ENCODE measurements at regions of chr16 and their contacts with region 1.

Region 1: GRCh38 chr16:49350265-49351095 is 23.1 kb upstream of the C16orf78 start:
- DNase-seq: peak in 1 of 2 experiments; percentile 94
- H3K4me3 ChIP-seq: no peak overlapping the region
- H3K27ac ChIP-seq: no peak overlapping the region
- H3K4me1 ChIP-seq: peaks cover 0 to 3% (median 0%) of the 10 kb centered on the region in 4 experiments; a peak in 1 of 7 replicates
- H3K27me3 ChIP-seq: no peaks in the 10 kb centered on the region
- CTCF ChIP-seq: peak; percentile 92 to 93 (median 92)
- EP300 ChIP-seq: no peak
- POLR2A ChIP-seq: no peak
- RAD21 ChIP-seq: peak; percentile 98 to 99

Region 2: DNA sequence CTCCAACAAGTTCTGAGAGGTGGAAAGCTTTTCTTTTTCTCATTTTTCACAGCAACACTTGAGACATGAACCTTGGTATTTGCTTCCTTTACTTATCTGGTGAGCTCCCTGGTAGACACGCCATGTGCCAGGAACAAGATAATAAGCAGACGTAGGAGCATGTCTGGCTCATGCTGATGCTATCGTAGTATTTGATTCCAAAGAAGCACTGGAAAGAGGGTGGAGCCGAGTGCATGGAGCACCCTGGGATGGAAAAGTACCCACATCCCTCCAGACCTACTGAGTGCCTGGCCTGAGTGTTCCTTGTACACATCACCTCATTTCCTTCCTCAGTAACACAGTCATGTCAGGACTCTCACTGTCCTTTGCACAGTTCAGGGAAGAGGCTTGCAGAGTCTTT is 299.9 kb before region 1 on chr16:
- CTCF ChIA-PET with region 1: interaction called, 10 read pairs
- POLR2A ChIA-PET with region 1: no interaction called
- DNase-seq: no peak
- H3K4me3 ChIP-seq: no peak overlapping the region
- H3K27ac ChIP-seq: no peak overlapping the region
- H3K4me1 ChIP-seq: peaks cover 0 to 2% (median under 1%) of the 10 kb centered on the region in 4 experiments; a peak in 4 of 7 replicates
- H3K27me3 ChIP-seq: no peaks in the 10 kb centered on the region; a peak in 1 of 7 replicates
- CTCF ChIP-seq: no peak
- EP300 ChIP-seq: no peak
- POLR2A ChIP-seq: no peak
- RAD21 ChIP-seq: no peak

Region 3: GRCh38 chr16:49269201-49269600 is 81.3 kb before region 1 on chr16:
- CTCF ChIA-PET with region 1: interaction called, 28 read pairs
- POLR2A ChIA-PET with region 1: no interaction called
- DNase-seq: no peak
- H3K4me3 ChIP-seq: no peak overlapping the region
- H3K27ac ChIP-seq: no peak overlapping the region
- H3K4me1 ChIP-seq: peaks cover 0 to under 1% (median 0%) of the 10 kb centered on the region in 4 experiments; a peak in 1 of 7 replicates
- H3K27me3 ChIP-seq: peaks cover 16 to 24% (median 20%) of the 10 kb centered on the region in 4 experiments
- CTCF ChIP-seq: no peak
- EP300 ChIP-seq: no peak
- POLR2A ChIP-seq: no peak
- RAD21 ChIP-seq: no peak

Region 4: GRCh38 chr16:49287572-49287971 is 62.9 kb before region 1 on chr16:
- CTCF ChIA-PET with region 1: interaction called, 22 read pairs
- POLR2A ChIA-PET with region 1: interaction called, 5 read pairs
- DNase-seq: no peak
- H3K4me3 ChIP-seq: no peak overlapping the region; a peak in 1 of 8 replicates
- H3K27ac ChIP-seq: no peak overlapping the region
- H3K4me1 ChIP-seq: peaks cover 0 to 14% (median 6%) of the 10 kb centered on the region in 4 experiments; a peak in 4 of 7 replicates
- H3K27me3 ChIP-seq: peaks cover 16 to 31% (median 27%) of the 10 kb centered on the region in 4 experiments
- CTCF ChIP-seq: peak; percentile 36 to 47 (median 43); a peak in 3 of 4 replicates
- EP300 ChIP-seq: no peak
- POLR2A ChIP-seq: no peak
- RAD21 ChIP-seq: peak; percentile 48 to 64

Region 5: GRCh38 chr16:49337814-49338350 is 12.6 kb before region 1 on chr16:
- CTCF ChIA-PET with region 1: interaction called, 67 read pairs
- POLR2A ChIA-PET with region 1: interaction called, 3 read pairs
- DNase-seq: peak in 1 of 2 experiments; percentile 37
- H3K4me3 ChIP-seq: no peak overlapping the region
- H3K27ac ChIP-seq: no peak overlapping the region
- H3K4me1 ChIP-seq: peaks cover 0 to 4% (median 1%) of the 10 kb centered on the region in 4 experiments; a peak in 2 of 7 replicates
- H3K27me3 ChIP-seq: no peaks in the 10 kb centered on the region; a peak in 1 of 7 replicates
- CTCF ChIP-seq: peak; percentile 14 to 36 (median 35)
- EP300 ChIP-seq: no peak
- POLR2A ChIP-seq: no peak
- RAD21 ChIP-seq: peak in 1 of 2 experiments; percentile 41; a peak in 1 of 4 replicates

Region 6: GRCh38 chr16:49739381-49739780 is 388.9 kb after region 1 on chr16:
- CTCF ChIA-PET with region 1: no interaction called
- POLR2A ChIA-PET with region 1: no interaction called
- DNase-seq: peak in 1 of 2 experiments; percentile 67
- H3K4me3 ChIP-seq: no peak overlapping the region
- H3K27ac ChIP-seq: no peak overlapping the region
- H3K4me1 ChIP-seq: peaks cover 0 to 3% (median 2%) of the 10 kb centered on the region in 4 experiments; a peak in 4 of 7 replicates
- H3K27me3 ChIP-seq: no peaks in the 10 kb centered on the region
- CTCF ChIP-seq: peak; percentile 52 to 74 (median 61)
- EP300 ChIP-seq: no peak
- POLR2A ChIP-seq: no peak
- RAD21 ChIP-seq: peak; percentile 57 to 60

Measured in H1 (cell line).